ENCODE measurements at regions of chr16 and their contacts with region 1.

Region 1: GRCh38 chr16:3305109-3306068 is at the starts of genes TIGD7 and ZNF75A:
- DNase-seq: peak; percentile 93
- H3K4me3 ChIP-seq: peak within 1 kb of the TSS; percentile 61 to 84 (median 67)
- H3K27ac ChIP-seq: peak within 1 kb of the TSS; percentile 89 to 94 (median 92)
- H3K4me1 ChIP-seq: peaks cover 0 to 35% (median 14%) of the 10 kb centered on the region in 4 donors
- H3K27me3 ChIP-seq: no peaks in the 10 kb centered on the region
- CTCF ChIP-seq: peak in 1 of 4 experiments; percentile 10
- EP300 ChIP-seq: no peak
- POLR2A ChIP-seq: peak; percentile 80 to 85
- total RNA-seq, gene TIGD7: 3.5 to 12.8 (median 6.3) TPM
- total RNA-seq, gene ZNF75A: 26.6 to 32.8 (median 27.7) TPM

Region 2: DNA sequence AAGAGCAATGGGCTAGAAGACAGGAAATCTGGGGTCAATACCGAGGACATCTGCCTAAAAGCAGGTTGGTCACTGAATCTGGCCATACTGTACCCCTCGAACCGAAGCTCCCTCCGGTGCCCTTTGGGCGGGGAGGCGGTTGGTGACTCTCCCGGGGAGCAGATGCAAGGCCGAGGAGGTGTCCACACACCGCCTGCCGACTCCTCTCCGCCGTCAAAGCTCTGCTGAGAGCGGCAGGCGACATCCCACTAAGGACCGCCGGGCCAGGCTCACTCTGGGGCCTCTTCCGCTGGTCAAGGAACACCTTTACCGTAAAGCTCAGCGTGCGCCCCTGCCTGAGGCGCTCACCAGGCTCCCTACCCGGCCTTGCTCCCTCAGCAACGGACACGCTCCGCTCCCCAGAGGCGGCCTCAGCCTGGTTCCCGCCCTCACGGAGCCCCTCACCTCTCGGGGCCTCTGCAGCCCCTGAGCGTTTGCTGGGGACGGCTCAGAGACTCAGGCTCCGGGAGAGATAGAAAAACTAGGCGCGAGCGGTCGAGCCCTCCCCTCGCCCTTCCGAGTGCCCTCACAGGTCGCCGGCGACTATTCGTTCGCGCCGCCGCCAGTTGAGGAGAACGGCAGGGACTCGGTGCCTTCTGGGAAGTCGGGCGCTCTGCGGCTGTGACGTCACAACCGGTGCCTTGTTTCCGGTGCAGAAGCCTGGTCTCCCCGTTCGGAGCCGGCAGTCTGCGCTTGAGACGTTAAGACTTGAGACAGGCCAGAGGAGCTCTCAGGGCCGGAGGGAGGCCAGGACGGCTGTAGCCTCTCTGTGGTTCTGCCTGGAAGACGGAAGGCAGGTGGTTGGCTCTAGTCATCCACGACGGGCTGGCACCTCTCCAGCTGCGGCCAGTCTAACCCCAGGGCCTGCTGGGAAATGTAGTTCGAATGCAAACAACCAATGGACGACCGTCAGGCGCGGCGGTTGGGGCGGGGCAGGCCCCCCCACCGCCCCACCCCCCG is 70.5 kb before region 1 on chr16 and contains the start of gene ZNF200:
- intact Hi-C with region 1: loop called (anchors 5 kb)
- DNase-seq: peak; percentile 99
- H3K4me3 ChIP-seq: peak within 1 kb of the TSS; percentile 76 to 90 (median 86)
- H3K27ac ChIP-seq: peak within 1 kb of the TSS; percentile 94 to 98 (median 96)
- H3K4me1 ChIP-seq: peaks cover 0 to 15% (median 13%) of the 10 kb centered on the region in 4 donors
- H3K27me3 ChIP-seq: no peaks in the 10 kb centered on the region
- CTCF ChIP-seq: no peak
- EP300 ChIP-seq: peak in 1 of 4 donors; percentile 4
- POLR2A ChIP-seq: peak; percentile 10 to 36
- total RNA-seq, gene ZNF200: 5.5 to 6.8 (median 6.2) TPM

Region 3: GRCh38 chr16:3264137-3265036 is 41.0 kb before region 1 on chr16:
- intact Hi-C with region 1: loop called (anchors 2 kb)
- DNase-seq: peak; percentile 99
- H3K4me3 ChIP-seq: peak overlapping the region; percentile 60 to 98 (median 86)
- H3K27ac ChIP-seq: peak overlapping the region; percentile 90 to 100 (median 97)
- H3K4me1 ChIP-seq: peaks cover 0 to 21% (median 20%) of the 10 kb centered on the region in 4 donors
- H3K27me3 ChIP-seq: no peaks in the 10 kb centered on the region
- CTCF ChIP-seq: peak in 2 of 4 experiments; percentile 13 to 18
- EP300 ChIP-seq: no peak
- POLR2A ChIP-seq: peak; percentile 87 to 91

Region 4: DNA sequence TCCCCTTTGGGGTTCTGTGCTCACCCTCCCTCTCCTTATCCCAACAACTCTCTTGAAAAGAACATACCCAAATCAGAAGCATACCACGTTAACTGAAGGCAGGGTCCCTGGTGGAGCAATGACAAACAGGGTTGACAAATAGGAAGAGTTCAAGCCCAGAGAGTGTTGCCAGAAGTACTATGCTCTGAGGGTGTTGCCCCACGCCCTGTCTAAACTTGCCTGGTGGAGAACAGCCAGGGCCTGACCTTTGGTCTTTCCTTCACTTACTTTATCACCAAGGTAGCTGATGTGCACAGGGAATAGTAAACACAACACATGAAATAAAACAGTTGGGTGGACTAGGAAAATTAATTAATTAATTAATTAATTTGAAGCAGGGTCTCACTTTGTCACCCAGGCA is 23.3 kb after region 1 on chr16:
- intact Hi-C with region 1: no loop called
- DNase-seq: no peak
- H3K4me3 ChIP-seq: no peak overlapping the region
- H3K27ac ChIP-seq: no peak overlapping the region
- H3K4me1 ChIP-seq: no peaks in the 10 kb centered on the region
- H3K27me3 ChIP-seq: no peaks in the 10 kb centered on the region
- CTCF ChIP-seq: no peak
- EP300 ChIP-seq: no peak
- POLR2A ChIP-seq: no peak

Region 5: DNA sequence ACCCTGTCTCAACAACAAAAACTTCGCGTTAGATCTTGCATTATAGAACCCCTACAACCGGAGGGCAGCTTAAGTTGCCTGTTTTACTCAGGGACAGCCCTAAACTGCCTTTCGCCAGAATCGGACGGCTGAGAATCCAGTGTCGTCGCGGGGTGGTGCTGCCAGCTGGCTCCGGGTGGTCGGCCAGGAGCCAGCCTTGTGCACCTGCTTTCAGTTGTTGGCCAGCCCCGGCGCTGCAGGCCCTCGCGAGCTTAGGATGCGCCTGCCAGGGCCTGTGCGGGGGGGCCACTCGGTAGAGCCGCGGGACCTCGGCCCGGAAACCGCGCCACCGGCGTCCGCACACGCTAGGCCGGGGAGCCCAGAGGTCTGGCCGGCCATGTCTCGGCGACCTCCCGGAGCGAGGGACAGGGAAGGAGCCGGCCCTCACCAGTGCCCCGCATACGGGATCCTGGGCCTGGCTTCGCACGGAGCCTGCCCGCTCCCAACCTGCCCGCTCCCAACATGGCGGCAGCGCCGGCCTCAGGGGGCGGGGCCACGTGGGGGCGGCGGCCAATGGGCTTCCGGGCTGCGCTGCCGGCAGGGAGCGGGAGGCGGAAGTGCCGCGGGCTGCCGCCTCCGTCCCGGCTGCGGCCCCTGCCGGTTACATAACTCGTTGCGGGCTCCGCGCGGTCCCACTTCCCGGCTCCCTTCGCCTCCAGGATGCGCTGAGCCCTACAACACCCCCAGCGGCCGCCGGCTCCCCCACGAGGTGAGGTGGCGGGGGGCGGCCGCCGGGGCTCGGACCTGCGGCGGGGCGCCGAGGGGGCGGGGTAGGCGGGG is 152.3 kb after region 1 on chr16:
- intact Hi-C with region 1: loop called (anchors 5 kb)
- DNase-seq: peak; percentile 96
- H3K4me3 ChIP-seq: peak overlapping the region; percentile 82 to 93 (median 84)
- H3K27ac ChIP-seq: peak overlapping the region; percentile 89 to 97 (median 94)
- H3K4me1 ChIP-seq: peaks cover 0 to 50% (median 42%) of the 10 kb centered on the region in 4 donors
- H3K27me3 ChIP-seq: no peaks in the 10 kb centered on the region
- CTCF ChIP-seq: peak in 2 of 4 experiments; percentile 19 to 46
- EP300 ChIP-seq: no peak
- POLR2A ChIP-seq: peak in 1 of 2 donors; percentile 37

Region 6: GRCh38 chr16:3503523-3503922 is 198.1 kb after region 1 on chr16:
- intact Hi-C with region 1: loop called (anchors 1 kb)
- DNase-seq: peak; percentile 37
- H3K4me3 ChIP-seq: no peak overlapping the region
- H3K27ac ChIP-seq: no peak overlapping the region
- H3K4me1 ChIP-seq: peaks cover 0 to 23% (median 17%) of the 10 kb centered on the region in 4 donors
- H3K27me3 ChIP-seq: no peaks in the 10 kb centered on the region
- CTCF ChIP-seq: no peak
- EP300 ChIP-seq: no peak
- POLR2A ChIP-seq: no peak

Region 7: GRCh38 chr16:3611146-3611975 is 306.0 kb after region 1 on chr16 and contains the start of gene SLX4:
- intact Hi-C with region 1: loop called (anchors 5 kb)
- DNase-seq: peak; percentile 95
- H3K4me3 ChIP-seq: peak within 1 kb of the TSS; percentile 85 to 98 (median 94)
- H3K27ac ChIP-seq: peak within 1 kb of the TSS; percentile 71 to 88 (median 82)
- H3K4me1 ChIP-seq: peaks cover 0 to 24% (median 16%) of the 10 kb centered on the region in 4 donors
- H3K27me3 ChIP-seq: no peaks in the 10 kb centered on the region
- CTCF ChIP-seq: no peak
- EP300 ChIP-seq: no peak
- POLR2A ChIP-seq: peak in 1 of 2 donors; percentile 36
- total RNA-seq, gene SLX4: 2.1 to 3.9 (median 2.6) TPM

Measured in sigmoid colon (tissue), 7 donors.